Activated CD4-positive, alpha-beta T cell treated with anti-CD3 and anti-CD28 coated beads for 36 hours (primary cell): ENCODE measurements at regions of chr3 and their contacts with region 1.

Region 1: DNA sequence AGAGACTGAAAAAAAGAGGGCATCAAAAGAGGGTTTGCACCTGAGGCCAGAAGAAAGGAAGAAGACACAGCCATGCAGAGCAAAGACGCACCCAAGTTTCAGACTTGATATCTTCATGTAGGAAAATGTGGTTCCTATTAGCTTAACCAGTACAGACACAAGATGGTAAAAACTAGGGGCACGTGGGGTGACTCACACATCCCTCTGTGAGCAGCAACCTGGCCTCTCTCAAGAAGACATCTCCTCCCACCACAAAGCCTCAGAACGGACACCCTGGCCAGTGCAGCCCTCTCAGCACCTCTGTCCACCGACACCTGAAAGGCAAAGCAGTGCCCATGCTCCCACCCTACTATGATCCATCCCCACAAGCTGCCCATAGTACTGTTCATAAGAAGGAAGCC is 33.3 kb downstream of the GLB1 start:
- DNase-seq: peak; percentile 83
- ATAC-seq: peak; percentile 57
- H3K4me3 Mint-ChIP-seq: peak overlapping the region; percentile 34
- H3K27ac Mint-ChIP-seq: peak overlapping the region; percentile 97
- H3K4me1 Mint-ChIP-seq: peaks cover 70% of the 10 kb centered on the region
- H3K27me3 Mint-ChIP-seq: no peaks in the 10 kb centered on the region

Region 2: GRCh38 chr3:32960404-32961170 is 103.1 kb before region 1 on chr3:
- CTCF ChIA-PET with region 1: interaction called, 3 read pairs
- POLR2A ChIA-PET with region 1: interaction called, 3 read pairs
- intact Hi-C with region 1: loop called (anchors 1 to 2 kb)
- DNase-seq: no peak
- ATAC-seq: peak; percentile 61
- H3K4me3 Mint-ChIP-seq: peak overlapping the region; percentile 8
- H3K27ac Mint-ChIP-seq: peak overlapping the region; percentile 97
- H3K4me1 Mint-ChIP-seq: peaks cover 77% of the 10 kb centered on the region
- H3K27me3 Mint-ChIP-seq: no peaks in the 10 kb centered on the region

Region 3: GRCh38 chr3:32992322-32992692 is 71.3 kb before region 1 on chr3:
- CTCF ChIA-PET with region 1: interaction called, 4 read pairs
- POLR2A ChIA-PET with region 1: interaction called, 11 read pairs
- intact Hi-C with region 1: loop called (anchors 1 kb)
- DNase-seq: no peak
- ATAC-seq: peak; percentile 6
- H3K4me3 Mint-ChIP-seq: peak overlapping the region; percentile 62
- H3K27ac Mint-ChIP-seq: peak overlapping the region; percentile 95
- H3K4me1 Mint-ChIP-seq: peaks cover 80% of the 10 kb centered on the region
- H3K27me3 Mint-ChIP-seq: peaks cover 2% of the 10 kb centered on the region

Region 4: GRCh38 chr3:33030802-33031201 is 32.8 kb before region 1 on chr3:
- CTCF ChIA-PET with region 1: interaction called, 19 read pairs
- POLR2A ChIA-PET with region 1: no interaction called
- intact Hi-C with region 1: loop called (anchors 1 to 2 kb)
- DNase-seq: peak; percentile 73
- ATAC-seq: peak; percentile 91
- H3K4me3 Mint-ChIP-seq: no peak overlapping the region
- H3K27ac Mint-ChIP-seq: peak overlapping the region; percentile 51
- H3K4me1 Mint-ChIP-seq: peaks cover 31% of the 10 kb centered on the region
- H3K27me3 Mint-ChIP-seq: no peaks in the 10 kb centered on the region

Region 5: DNA sequence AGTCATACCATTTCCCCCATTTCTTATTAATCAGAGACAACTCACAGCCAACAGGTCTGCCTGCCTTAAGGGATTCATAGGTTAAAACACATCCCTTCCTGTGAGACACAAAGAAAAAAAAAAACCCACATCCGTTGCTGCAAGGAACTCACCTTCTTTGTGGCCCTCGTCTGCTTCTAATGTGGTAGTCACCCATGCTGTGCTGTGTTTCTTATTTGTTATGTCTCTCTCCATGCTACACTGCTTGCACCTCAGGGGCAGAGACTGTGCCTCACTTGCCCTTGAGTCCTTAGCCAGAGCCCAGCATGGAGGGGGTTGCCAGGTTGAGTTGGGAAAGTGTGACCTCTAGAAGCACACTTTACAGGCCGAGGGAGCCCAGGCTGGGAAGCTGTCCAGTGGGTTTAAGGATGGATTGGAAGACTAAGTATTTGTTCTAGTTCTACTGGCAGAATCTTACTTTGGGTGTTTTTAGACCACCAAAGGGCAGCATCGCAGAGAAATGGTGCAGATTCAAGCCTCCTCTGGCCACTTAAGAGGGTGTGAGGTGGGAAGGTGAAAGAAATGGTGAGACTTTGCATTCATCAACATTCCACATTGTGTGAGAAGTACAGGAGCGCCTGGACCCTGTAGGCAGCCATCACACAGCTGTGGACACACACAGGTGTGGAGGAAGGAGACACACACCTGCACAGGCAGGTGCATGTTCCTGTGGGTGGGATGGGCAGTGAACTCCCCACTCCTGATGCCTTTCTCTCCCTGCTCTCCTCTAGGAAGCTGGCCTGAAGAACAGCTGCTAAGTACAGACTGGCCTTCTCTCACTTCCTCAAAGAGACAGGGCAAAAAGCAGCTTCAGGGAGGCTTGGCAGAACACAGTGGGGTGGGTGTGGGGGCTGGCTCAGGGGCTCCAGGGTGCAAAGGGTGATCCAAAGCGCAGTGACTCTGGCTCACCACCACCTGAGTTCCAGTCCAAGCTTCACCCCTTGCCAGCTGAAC is 15.5 kb before region 1 on chr3:
- CTCF ChIA-PET with region 1: interaction called, 71 read pairs
- POLR2A ChIA-PET with region 1: interaction called, 8 read pairs
- intact Hi-C with region 1: loop called (anchors 1 kb)
- DNase-seq: peak; percentile 65
- ATAC-seq: peak; percentile 84
- H3K4me3 Mint-ChIP-seq: peak overlapping the region; percentile 29
- H3K27ac Mint-ChIP-seq: peak overlapping the region; percentile 94
- H3K4me1 Mint-ChIP-seq: peaks cover 74% of the 10 kb centered on the region
- H3K27me3 Mint-ChIP-seq: no peaks in the 10 kb centered on the region

Region 6: DNA sequence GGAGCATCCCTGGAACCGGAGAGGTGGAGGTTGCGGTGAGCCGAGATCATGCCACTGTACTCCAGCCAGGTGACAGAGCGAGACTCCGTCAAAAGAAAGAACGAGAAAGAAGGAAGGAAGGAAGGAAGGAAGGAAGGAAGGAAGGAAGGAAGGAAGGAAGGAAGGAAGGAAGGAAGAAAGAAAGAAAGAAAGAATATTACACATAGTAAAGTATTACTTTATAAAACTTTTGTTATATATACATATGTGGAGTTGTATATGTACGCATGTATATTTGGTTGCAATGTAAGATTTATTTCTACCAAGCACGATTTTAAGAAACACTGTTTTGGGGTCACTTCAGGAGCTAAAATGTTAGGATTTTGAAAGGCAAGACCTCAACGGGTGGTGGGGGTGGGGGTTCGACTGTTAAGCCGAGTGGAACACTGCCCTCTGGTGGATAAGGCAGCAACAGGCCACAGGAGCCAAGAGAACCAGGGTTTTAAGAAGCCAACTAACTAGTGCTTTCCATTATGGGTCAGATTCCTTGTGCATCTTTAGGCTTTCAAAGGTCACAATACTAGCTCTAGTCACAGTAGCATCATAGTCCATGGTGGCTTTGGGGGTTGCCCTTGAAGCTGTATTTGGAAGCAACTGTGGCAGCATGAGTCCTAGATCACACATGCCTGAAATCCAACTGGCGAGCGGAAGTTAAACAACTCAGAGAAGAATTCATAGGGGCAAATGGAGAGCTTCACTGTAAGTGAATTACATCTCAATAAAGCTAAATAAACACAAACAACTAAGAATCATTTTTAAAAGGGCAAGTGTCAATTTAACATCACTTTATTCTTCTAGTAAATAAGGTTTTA is 10.8 kb after region 1 on chr3:
- CTCF ChIA-PET with region 1: interaction called, 13 read pairs
- POLR2A ChIA-PET with region 1: no interaction called
- intact Hi-C with region 1: no loop called
- DNase-seq: peak; percentile 83
- ATAC-seq: peak; percentile 91
- H3K4me3 Mint-ChIP-seq: no peak overlapping the region
- H3K27ac Mint-ChIP-seq: peak overlapping the region; percentile 17
- H3K4me1 Mint-ChIP-seq: peaks cover 26% of the 10 kb centered on the region
- H3K27me3 Mint-ChIP-seq: no peaks in the 10 kb centered on the region